Activated naive CD8-positive, alpha-beta T cell treated with anti-CD3 and anti-CD28 coated beads, Interleukin-2, amount 10 ng/mL, durations not matched to agents 7 days and 5 days (primary cell): ENCODE measurements at regions of chr16 and their contacts with region 1.

Region 1: GRCh38 chr16:27235055-27235937 is 32.0 kb downstream of the KDM8 start:
- DNase-seq: peak; percentile 84
- ATAC-seq: peak; percentile 61
- H3K4me3 Mint-ChIP-seq: peak overlapping the region; percentile 76
- H3K27ac Mint-ChIP-seq: peak overlapping the region; percentile 100
- H3K4me1 Mint-ChIP-seq: peaks cover 84% of the 10 kb centered on the region
- H3K27me3 Mint-ChIP-seq: no peaks in the 10 kb centered on the region

Region 2: GRCh38 chr16:27161398-27161797 is 73.9 kb before region 1 on chr16:
- POLR2A ChIA-PET with region 1: no interaction called
- DNase-seq: no peak
- ATAC-seq: no peak
- H3K4me3 Mint-ChIP-seq: no peak overlapping the region
- H3K27ac Mint-ChIP-seq: no peak overlapping the region
- H3K4me1 Mint-ChIP-seq: no peaks in the 10 kb centered on the region
- H3K27me3 Mint-ChIP-seq: no peaks in the 10 kb centered on the region

Region 3: DNA sequence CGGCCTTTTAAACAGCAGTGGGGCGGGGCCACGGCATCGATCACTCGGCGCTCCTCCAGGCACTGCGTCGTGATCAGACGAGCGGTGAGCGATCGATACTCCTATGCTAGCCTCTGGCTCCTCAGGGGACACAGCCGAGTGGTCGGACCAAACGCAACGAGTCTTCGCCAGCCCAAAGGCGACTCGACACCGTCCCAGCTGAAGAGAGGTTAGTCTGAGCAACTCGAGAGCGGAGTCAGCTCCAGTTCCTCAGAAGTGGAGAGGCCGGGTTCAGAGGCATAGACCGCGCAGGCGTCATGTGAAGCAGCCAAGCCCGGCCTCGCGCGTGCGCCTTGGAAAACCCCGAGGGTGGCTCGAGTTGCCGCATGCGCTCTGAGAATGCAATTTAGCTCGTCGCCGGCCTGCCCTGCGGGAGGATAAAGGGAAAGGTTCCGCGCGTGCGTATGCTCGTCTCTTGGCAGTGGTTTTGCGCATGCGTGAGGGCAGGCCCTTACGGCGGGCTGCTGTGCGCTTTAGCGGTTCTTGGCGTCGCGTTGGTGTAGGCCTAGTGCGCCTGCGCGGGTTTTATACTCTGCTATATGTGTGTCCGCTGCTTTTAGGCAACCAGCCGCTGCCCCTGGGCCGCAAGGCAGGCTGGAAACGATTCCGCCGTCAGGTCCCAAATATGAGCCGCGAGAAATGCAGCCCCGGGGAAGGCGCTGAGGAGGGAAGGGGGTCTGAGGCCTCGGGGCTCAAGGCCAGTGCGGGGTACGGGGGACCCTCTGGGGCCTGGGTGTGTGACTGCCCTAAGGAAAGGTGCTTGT is 31.7 kb before region 1 on chr16 and contains the start of gene KDM8:
- POLR2A ChIA-PET with region 1: interaction called, 17 read pairs
- DNase-seq: peak; percentile 98
- ATAC-seq: peak; percentile 92
- H3K4me3 Mint-ChIP-seq: peak within 1 kb of the TSS; percentile 90
- H3K27ac Mint-ChIP-seq: peak within 1 kb of the TSS; percentile 100
- H3K4me1 Mint-ChIP-seq: peaks cover 37% of the 10 kb centered on the region
- H3K27me3 Mint-ChIP-seq: no peaks in the 10 kb centered on the region
- total RNA-seq, gene KDM8: 20.1 to 21.8 TPM

Region 4: GRCh38 chr16:27273670-27274423 is 38.6 kb after region 1 on chr16:
- POLR2A ChIA-PET with region 1: interaction called, 61 read pairs
- DNase-seq: peak; percentile 44
- ATAC-seq: peak; percentile 82
- H3K4me3 Mint-ChIP-seq: peak overlapping the region; percentile 63
- H3K27ac Mint-ChIP-seq: peak overlapping the region; percentile 98
- H3K4me1 Mint-ChIP-seq: peaks cover 44% of the 10 kb centered on the region
- H3K27me3 Mint-ChIP-seq: no peaks in the 10 kb centered on the region

Region 5: GRCh38 chr16:27326738-27327585 is 91.7 kb after region 1 on chr16:
- POLR2A ChIA-PET with region 1: interaction called, 275 read pairs
- DNase-seq: peak; percentile 55
- ATAC-seq: peak; percentile 74
- H3K4me3 Mint-ChIP-seq: peak overlapping the region; percentile 67
- H3K27ac Mint-ChIP-seq: peak overlapping the region; percentile 87
- H3K4me1 Mint-ChIP-seq: peaks cover 67% of the 10 kb centered on the region
- H3K27me3 Mint-ChIP-seq: no peaks in the 10 kb centered on the region

Region 6: GRCh38 chr16:27460663-27461482 is 225.6 kb after region 1 on chr16:
- POLR2A ChIA-PET with region 1: interaction called, 10 read pairs
- DNase-seq: no peak
- ATAC-seq: no peak
- H3K4me3 Mint-ChIP-seq: no peak overlapping the region
- H3K27ac Mint-ChIP-seq: no peak overlapping the region
- H3K4me1 Mint-ChIP-seq: peaks cover 31% of the 10 kb centered on the region
- H3K27me3 Mint-ChIP-seq: no peaks in the 10 kb centered on the region